ENCODE measurements at regions of chr5 and their contacts with region 1.

Region 1: DNA sequence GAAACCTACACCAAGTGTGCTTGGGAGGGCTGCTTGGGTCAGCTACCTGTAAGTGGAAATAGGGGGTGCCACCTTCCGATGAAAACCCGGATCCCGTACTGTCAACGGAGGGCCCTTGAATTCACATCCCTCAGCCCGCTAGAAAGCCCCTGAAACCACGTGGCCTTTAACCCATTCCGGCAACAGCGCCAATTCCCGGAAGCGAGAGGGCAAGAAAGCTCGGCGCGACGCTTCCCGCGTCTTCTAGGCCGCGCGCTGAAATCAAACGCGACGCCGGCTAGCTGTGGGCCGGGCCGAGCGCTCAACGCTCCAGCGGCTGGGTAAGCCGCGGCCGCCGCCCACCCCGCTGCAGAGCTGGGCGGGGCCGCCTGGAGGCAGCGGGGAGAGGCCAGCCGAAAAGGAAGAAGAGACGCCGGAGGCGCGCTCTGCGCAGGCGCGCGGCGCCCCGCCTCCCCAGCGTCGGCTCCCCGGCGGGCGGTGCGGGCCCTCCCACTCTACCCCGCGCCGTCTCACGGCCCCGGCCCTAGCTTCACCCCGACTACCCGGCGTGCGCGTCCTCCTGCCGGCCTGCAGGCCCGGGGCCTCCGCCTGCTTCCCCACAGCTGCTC is at the start of gene KIF2A:
- DNase-seq: peak; percentile 97
- ATAC-seq: peak; percentile 88
- H3K4me3 Mint-ChIP-seq: peak within 1 kb of the TSS; percentile 99
- H3K27ac Mint-ChIP-seq: peak within 1 kb of the TSS; percentile 100
- H3K4me1 Mint-ChIP-seq: peaks cover 47% of the 10 kb centered on the region
- H3K27me3 Mint-ChIP-seq: no peaks in the 10 kb centered on the region
- CTCF ChIP-seq: no peak
- total RNA-seq, gene KIF2A: 251 to 257 TPM

Region 2: GRCh38 chr5:62124266-62124665 is 181.6 kb before region 1 on chr5:
- CTCF ChIA-PET with region 1: no interaction called
- POLR2A ChIA-PET with region 1: no interaction called
- intact Hi-C with region 1: no loop called
- DNase-seq: no peak
- ATAC-seq: no peak
- H3K4me3 Mint-ChIP-seq: no peak overlapping the region
- H3K27ac Mint-ChIP-seq: no peak overlapping the region
- H3K4me1 Mint-ChIP-seq: no peaks in the 10 kb centered on the region
- H3K27me3 Mint-ChIP-seq: no peaks in the 10 kb centered on the region
- CTCF ChIP-seq: no peak

Region 3: GRCh38 chr5:62231576-62231975 is 74.2 kb before region 1 on chr5:
- CTCF ChIA-PET with region 1: no interaction called
- POLR2A ChIA-PET with region 1: interaction called, 3 read pairs
- intact Hi-C with region 1: loop called (anchors 10 kb)
- DNase-seq: no peak
- ATAC-seq: no peak
- H3K4me3 Mint-ChIP-seq: no peak overlapping the region
- H3K27ac Mint-ChIP-seq: no peak overlapping the region
- H3K4me1 Mint-ChIP-seq: peaks cover 31% of the 10 kb centered on the region
- H3K27me3 Mint-ChIP-seq: peaks cover 1% of the 10 kb centered on the region
- CTCF ChIP-seq: no peak

Region 4: DNA sequence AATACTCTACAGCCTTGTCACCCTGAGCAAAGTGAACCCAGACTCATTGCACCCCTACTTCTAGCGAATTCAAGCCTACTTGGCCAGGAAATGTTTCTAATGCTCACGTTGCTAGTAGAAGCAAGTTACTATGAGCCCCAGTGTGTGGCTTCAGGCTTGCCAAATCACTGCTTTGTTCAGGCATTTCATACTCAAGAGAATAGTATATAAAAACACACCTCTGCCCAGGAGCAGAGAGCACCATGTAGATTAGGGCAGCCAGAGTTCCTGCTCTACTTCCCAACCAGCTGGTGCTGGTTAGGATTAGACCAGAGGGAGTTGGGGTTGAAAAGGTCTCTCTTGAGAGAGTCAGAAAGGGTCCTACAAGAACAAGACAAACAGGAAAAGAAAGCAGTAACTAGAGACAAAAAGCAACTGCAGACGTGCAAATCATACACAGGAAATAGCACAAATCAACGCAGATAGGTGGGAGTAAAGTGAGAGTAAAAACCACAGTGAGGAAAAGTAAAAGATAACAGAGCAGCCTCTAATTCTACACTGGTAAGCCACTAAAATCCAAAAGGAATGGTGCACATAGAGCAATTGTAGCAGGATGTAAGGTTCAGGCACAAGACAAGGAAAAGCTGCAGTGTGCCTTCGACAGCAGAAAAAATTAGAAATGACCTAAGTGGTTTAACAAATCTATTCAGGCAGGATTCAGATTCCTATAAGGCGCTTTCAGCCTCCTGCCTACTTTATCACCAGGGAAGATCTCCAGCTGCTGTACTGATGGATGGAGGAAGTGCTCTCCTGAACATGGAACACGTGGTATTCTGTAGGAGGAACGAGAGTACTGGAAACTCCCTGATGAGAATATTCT is 49.4 kb before region 1 on chr5:
- CTCF ChIA-PET with region 1: no interaction called
- POLR2A ChIA-PET with region 1: interaction called, 9 read pairs
- intact Hi-C with region 1: loop called (anchors 5 kb)
- DNase-seq: peak; percentile 51
- ATAC-seq: peak; percentile 79
- H3K4me3 Mint-ChIP-seq: peak overlapping the region; percentile 52
- H3K27ac Mint-ChIP-seq: peak overlapping the region; percentile 88
- H3K4me1 Mint-ChIP-seq: peaks cover 79% of the 10 kb centered on the region
- H3K27me3 Mint-ChIP-seq: no peaks in the 10 kb centered on the region
- CTCF ChIP-seq: no peak

Region 5: DNA sequence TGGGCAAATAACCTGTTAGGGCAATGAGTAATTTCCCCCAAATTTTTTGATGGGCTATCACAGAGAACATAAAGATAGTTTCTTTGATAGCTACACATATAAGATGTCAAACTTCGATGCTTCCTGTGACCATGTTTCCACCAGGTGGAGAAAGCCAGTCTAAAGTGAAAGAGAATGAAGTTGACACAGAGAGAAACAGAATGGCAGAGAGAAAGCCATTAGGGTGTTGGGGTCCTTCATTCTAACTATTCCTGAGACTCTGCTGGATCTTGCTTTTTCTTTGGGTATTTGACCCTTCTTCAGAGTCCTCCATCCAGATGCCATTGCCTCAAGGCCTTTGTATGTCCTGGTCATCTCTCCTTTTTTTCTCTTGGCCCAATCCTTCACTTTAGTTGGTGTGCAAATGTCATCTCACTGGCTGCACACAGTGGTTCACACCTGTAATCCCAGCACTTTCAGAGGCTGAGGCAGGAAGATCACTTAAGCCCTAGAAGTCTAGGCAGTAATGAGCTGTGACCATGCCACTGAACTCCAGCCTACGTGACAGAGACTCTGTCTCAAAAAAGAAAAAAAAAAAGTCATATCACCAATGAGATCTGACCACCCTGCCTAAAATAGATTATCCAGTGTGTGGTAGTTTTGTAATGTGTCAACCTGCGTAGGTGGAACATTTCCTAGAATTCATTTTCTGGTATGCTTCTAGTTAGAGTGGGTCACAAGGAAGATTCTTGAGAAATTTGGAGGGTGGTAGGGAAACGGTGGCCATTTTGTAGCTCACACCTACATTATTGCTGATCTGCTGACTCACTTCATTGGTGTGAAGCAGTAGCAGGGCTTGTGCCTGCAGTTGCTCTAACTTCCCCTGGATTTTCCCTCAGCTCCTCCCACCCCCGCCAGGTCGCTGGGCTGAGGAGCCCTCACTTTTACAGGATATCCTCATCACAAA is 20.6 kb before region 1 on chr5:
- CTCF ChIA-PET with region 1: interaction called, 12 read pairs
- POLR2A ChIA-PET with region 1: interaction called, 19 read pairs
- intact Hi-C with region 1: loop called (anchors 2 kb)
- DNase-seq: peak; percentile 86
- ATAC-seq: peak; percentile 86
- H3K4me3 Mint-ChIP-seq: peak overlapping the region; percentile 37
- H3K27ac Mint-ChIP-seq: peak overlapping the region; percentile 95
- H3K4me1 Mint-ChIP-seq: peaks cover 75% of the 10 kb centered on the region
- H3K27me3 Mint-ChIP-seq: no peaks in the 10 kb centered on the region
- CTCF ChIP-seq: no peak

Region 6: GRCh38 chr5:62326302-62326701 is 20.5 kb after region 1 on chr5:
- CTCF ChIA-PET with region 1: interaction called, 13 read pairs
- POLR2A ChIA-PET with region 1: interaction called, 22 read pairs
- intact Hi-C with region 1: no loop called
- DNase-seq: no peak
- ATAC-seq: peak; percentile 48
- H3K4me3 Mint-ChIP-seq: no peak overlapping the region
- H3K27ac Mint-ChIP-seq: peak overlapping the region; percentile 36
- H3K4me1 Mint-ChIP-seq: peaks cover 76% of the 10 kb centered on the region
- H3K27me3 Mint-ChIP-seq: no peaks in the 10 kb centered on the region
- CTCF ChIP-seq: no peak

Region 7: DNA sequence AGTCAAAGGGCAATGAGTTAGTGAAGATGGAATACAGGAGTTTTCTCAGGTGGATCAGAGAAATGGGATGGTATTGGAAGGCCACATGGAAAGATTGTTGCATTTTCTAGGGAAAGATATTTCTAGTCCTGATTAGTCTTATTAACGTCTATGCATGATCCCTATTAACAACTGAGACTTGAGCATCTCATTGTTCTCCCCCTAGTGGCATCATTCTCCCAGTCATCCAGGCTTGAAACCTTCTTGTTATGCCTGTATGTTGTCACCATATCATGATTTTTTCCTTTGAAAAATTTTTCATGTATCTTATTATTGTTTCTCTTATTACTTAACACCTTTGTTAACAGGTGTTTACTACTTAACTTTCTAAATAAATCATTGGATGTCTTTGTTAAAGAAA is 34.6 kb after region 1 on chr5:
- CTCF ChIA-PET with region 1: interaction called, 3 read pairs
- POLR2A ChIA-PET with region 1: interaction called, 5 read pairs
- intact Hi-C with region 1: loop called (anchors 5 kb)
- DNase-seq: peak; percentile 28
- ATAC-seq: no peak
- H3K4me3 Mint-ChIP-seq: no peak overlapping the region
- H3K27ac Mint-ChIP-seq: peak overlapping the region; percentile 44
- H3K4me1 Mint-ChIP-seq: peaks cover 64% of the 10 kb centered on the region
- H3K27me3 Mint-ChIP-seq: no peaks in the 10 kb centered on the region
- CTCF ChIP-seq: peak; percentile 58

Region 8: GRCh38 chr5:62403434-62404250 is 97.8 kb after region 1 on chr5 and contains the start of gene DIMT1:
- CTCF ChIA-PET with region 1: interaction called, 3 read pairs
- POLR2A ChIA-PET with region 1: interaction called, 3 read pairs
- intact Hi-C with region 1: loop called (anchors 5 kb)
- DNase-seq: peak; percentile 98
- ATAC-seq: peak; percentile 98
- H3K4me3 Mint-ChIP-seq: peak within 1 kb of the TSS; percentile 100
- H3K27ac Mint-ChIP-seq: peak within 1 kb of the TSS; percentile 96
- H3K4me1 Mint-ChIP-seq: peaks cover 27% of the 10 kb centered on the region
- H3K27me3 Mint-ChIP-seq: no peaks in the 10 kb centered on the region
- CTCF ChIP-seq: no peak
- total RNA-seq, gene DIMT1: 51.3 to 59.1 TPM

Measured in activated CD8-positive, alpha-beta T cell treated with anti-CD3 and anti-CD28 coated beads for 36 hours (primary cell).